ENCODE measurements at regions of chr2 and their contacts with region 1.

Region 1: DNA sequence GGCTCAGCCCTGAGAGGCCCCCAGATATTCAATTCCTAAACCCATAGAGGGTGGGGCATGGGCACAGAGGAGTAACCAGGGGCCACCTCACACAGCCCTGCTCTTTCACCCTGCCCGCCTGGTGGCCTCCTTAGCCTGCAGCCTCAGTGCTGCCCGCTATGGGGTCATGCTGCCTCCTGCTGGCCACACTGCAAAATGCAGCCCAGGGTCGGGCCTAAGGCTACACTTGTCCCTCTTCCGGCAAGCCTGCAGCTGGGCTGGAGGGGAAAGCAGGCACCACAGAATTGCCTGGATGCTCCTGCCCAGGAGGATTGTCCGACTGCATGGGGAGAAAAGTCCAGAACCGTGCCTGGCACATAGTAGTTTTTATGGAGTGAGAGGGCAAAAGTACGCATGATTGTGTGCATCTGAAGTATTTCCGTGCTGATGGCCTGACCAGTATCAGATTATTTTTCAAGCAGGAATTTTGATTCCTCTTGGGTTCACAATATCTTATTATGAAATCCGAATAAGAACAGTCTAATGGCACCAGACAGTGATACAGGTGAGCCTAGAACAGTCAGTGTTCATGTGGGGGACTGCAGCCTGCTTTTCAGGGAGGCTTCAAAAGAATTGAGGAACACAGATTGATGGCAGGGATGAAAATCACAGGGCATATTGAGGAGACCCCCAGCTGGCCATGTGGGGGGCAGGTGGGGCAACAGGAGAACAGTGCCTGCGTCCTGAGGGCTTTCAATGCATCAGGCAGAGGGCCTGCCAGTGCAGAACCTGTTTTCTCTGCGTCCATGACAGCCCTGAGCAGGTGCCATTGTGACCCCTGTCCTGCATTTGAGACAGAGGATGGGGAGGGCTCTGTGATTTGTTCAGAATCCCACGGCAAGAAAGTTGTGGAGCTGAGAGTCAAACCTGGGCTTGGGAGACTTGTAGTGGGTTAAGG is 51.2 kb upstream of the ALPP start:
- DNase-seq: peak; percentile 96
- ATAC-seq: peak; percentile 71
- H3K4me3 Mint-ChIP-seq: no peak overlapping the region
- H3K27ac Mint-ChIP-seq: peak overlapping the region; percentile 68; the same call in 1 of the 2 replicates
- H3K4me1 Mint-ChIP-seq: peaks cover 3% of the 10 kb centered on the region; the same call in 1 of the 2 replicates
- H3K27me3 Mint-ChIP-seq: no peaks in the 10 kb centered on the region
- CTCF ChIP-seq: peak; percentile 91

Region 2: DNA sequence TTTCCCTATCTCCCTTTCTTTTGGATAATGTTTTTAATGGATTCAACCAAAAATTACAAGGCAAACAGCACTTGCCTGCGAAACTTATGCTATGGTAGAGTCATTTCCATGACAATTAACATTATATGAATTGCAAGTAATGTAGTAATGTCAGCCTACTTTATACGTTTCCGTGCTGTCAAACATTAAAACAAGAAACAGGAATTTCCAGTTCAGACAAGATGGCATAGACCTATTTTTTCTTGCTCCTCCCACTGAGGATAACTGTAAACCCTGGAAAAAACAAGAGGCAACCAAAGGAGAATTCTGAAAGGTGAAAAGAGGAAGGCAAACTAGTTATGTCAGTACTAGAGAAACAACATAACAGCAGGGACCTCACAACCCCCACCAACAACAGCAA is 195.2 kb before region 1 on chr2:
- CTCF ChIA-PET with region 1: no interaction called
- POLR2A ChIA-PET with region 1: interaction called, 11 read pairs
- DNase-seq: no peak
- ATAC-seq: no peak
- H3K4me3 Mint-ChIP-seq: no peak overlapping the region
- H3K27ac Mint-ChIP-seq: no peak overlapping the region
- H3K4me1 Mint-ChIP-seq: peaks cover 12% of the 10 kb centered on the region
- H3K27me3 Mint-ChIP-seq: no peaks in the 10 kb centered on the region
- CTCF ChIP-seq: no peak

Region 3: DNA sequence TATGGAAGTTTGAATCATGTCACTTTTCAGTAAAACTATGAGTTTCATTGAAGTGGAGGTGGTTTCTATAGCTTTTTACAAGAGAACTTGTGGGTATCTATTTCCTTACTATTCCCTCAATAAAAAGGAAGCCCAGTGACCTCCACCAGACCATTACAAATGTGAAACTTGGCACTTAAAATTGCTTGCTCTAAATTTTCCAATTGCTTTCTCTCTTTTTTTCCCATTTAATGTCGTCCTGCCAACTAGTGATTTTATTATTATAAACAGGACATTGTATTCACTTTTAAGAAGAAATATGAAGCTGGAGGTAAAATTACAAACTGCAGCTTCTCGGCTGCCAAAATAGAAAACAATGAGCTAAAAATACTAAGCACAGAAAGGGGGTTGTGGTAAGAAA is 157.0 kb before region 1 on chr2:
- CTCF ChIA-PET with region 1: no interaction called
- POLR2A ChIA-PET with region 1: no interaction called
- DNase-seq: no peak
- ATAC-seq: no peak
- H3K4me3 Mint-ChIP-seq: no peak overlapping the region
- H3K27ac Mint-ChIP-seq: no peak overlapping the region
- H3K4me1 Mint-ChIP-seq: peaks cover 8% of the 10 kb centered on the region
- H3K27me3 Mint-ChIP-seq: no peaks in the 10 kb centered on the region
- CTCF ChIP-seq: no peak

Region 4: GRCh38 chr2:232315049-232315922 is 12.1 kb before region 1 on chr2:
- CTCF ChIA-PET with region 1: interaction called, 12 read pairs
- POLR2A ChIA-PET with region 1: no interaction called
- DNase-seq: no peak
- ATAC-seq: peak; percentile 16; the same call in 1 of the 2 replicates
- H3K4me3 Mint-ChIP-seq: no peak overlapping the region
- H3K27ac Mint-ChIP-seq: no peak overlapping the region
- H3K4me1 Mint-ChIP-seq: no peaks in the 10 kb centered on the region
- H3K27me3 Mint-ChIP-seq: no peaks in the 10 kb centered on the region
- CTCF ChIP-seq: no peak